ENCODE measurements at regions of chr1 and their contacts with region 1.

Region 1: GRCh38 chr1:15328351-15329103 is 81.2 kb upstream of the EFHD2 start:
- DNase-seq: peak; percentile 80
- ATAC-seq: peak; percentile 89

Region 2: DNA sequence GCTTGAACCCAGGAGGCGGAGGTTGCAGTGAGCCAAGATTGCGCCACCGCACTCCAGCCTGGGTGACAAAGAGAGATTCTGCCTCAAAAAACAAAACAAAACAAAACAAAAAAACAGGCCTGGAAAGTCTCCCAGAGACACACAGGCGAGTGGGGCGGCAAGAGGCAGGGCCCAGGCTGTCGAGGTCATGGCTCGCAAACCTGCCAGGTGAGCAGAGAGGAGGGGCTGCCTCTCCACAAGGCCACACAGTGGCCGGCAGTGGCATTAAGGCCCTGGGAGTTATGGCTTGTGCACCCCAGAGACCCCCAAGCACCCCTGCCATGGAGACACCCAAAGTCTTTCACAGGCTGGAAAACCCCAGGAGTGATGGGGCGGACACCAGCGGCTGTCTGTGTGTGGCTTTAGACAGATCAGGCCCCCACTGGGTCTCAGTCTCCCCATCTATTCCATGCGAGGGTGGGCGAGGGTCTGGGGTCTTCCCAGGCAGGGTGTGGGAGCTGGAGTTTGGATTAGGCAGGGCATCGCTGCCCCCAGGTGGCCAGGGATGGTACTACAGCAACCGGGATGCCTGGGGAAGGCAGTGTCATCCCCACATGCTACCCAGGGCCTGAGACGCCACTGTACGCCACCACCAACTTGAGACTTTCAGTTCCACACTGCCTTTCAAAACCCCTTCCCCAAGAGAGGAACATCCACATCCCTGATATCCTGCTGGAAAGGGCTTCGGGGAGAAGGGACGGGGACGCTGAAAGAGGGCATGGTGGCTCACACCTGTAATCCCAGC is 102.5 kb after region 1 on chr1:
- intact Hi-C with region 1: loop called (anchors 5 kb)
- DNase-seq: peak; percentile 83
- ATAC-seq: peak; percentile 68